ENCODE measurements at regions of chr7 and their contacts with region 1.

Region 1: DNA sequence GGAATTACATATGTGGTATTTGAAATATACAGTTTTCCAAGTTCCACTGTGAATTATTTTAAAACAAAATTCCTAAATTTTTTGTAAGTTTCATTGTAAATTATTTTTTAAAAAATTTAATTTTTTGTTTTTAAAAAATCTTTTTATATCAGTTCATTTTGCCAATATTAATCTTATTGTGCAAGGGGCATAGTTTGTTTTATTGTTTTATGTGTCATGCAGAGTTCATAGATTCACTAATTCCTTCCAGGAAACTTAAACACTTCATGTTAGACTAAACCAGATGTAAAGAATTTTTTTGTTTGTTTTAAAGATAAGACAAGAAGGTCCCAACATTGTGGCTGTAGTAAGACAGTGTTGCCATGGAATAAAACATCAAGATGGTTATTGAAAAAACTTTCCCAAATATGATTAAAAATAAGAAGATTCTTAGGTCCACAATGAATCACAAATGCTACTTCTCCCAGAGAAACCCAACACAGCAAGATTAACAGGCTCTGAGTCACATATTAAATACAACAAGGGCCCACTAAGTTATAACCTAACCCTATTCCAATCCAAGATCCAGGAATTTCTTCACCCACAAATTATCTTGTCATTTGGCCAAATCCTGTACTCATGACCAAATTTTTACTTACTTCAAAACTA is 464.7 kb upstream of the IGFBP3 start:
- DNase-seq: peak; percentile 91
- H3K4me3 ChIP-seq: no peak overlapping the region
- H3K27ac ChIP-seq: peak overlapping the region; percentile 98
- H3K27me3 ChIP-seq: no peaks in the 10 kb centered on the region
- CTCF ChIP-seq: no peak

Region 2: DNA sequence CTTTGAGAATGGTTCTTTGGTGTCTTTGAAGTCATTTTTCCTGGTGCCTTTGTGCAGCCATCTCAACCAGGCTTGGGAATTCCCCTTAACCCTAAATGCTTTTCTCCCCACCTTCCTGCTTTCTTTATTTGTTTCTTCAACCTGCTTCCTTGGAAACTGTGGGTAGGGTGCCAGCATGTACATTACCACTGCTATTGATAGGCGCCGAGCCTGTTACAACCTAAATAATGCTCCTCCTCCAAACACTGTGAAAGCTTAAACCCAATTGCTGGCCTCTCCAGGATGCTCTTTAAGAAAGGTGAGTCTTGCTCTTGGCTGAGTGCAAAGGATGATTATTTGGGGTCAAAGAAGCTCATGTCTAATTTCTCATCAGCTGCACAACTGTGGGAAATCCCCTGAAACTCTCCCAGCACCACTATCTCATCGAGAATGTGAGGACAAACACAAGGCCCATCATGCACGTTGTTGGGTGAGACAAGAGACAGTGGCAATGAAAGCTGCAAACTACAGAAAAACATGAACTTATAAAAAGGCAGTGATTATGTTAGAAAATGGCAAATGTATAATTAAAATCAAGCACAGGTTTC is 179.2 kb before region 1 on chr7:
- in situ Hi-C with region 1: no loop called
- DNase-seq: no peak
- H3K4me3 ChIP-seq: no peak overlapping the region
- H3K27ac ChIP-seq: no peak overlapping the region
- H3K27me3 ChIP-seq: no peaks in the 10 kb centered on the region
- CTCF ChIP-seq: no peak

Region 3: DNA sequence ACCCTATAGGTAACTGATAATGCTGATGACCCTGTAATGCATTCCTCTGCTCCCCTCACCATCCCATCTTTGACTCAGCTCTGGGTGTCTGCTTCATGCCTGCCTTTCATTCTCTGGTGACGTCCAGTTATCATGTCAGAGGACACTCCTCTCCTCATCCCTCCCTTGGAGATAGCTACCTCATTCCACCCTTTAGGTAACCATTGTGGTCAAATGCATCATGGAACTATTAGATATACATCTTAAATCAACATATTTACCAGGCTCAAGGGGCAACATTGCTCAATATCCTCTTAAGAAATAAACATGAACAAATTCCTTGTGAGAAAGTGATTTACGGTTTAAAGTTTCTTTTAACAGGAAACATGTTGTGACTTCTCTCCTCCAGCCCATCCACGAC is 46.9 kb after region 1 on chr7:
- in situ Hi-C with region 1: no loop called
- DNase-seq: peak; percentile 84
- H3K4me3 ChIP-seq: no peak overlapping the region
- H3K27ac ChIP-seq: peak overlapping the region; percentile 66
- H3K27me3 ChIP-seq: no peaks in the 10 kb centered on the region
- CTCF ChIP-seq: no peak

Region 4: GRCh38 chr7:46544374-46545008 is 158.7 kb after region 1 on chr7:
- in situ Hi-C with region 1: loop called (anchors 25 kb)
- DNase-seq: no peak
- H3K4me3 ChIP-seq: no peak overlapping the region
- H3K27ac ChIP-seq: peak overlapping the region; percentile 96
- H3K27me3 ChIP-seq: no peaks in the 10 kb centered on the region
- CTCF ChIP-seq: no peak